ENCODE measurements at regions of chr17 and their contacts with region 1.

Region 1: DNA sequence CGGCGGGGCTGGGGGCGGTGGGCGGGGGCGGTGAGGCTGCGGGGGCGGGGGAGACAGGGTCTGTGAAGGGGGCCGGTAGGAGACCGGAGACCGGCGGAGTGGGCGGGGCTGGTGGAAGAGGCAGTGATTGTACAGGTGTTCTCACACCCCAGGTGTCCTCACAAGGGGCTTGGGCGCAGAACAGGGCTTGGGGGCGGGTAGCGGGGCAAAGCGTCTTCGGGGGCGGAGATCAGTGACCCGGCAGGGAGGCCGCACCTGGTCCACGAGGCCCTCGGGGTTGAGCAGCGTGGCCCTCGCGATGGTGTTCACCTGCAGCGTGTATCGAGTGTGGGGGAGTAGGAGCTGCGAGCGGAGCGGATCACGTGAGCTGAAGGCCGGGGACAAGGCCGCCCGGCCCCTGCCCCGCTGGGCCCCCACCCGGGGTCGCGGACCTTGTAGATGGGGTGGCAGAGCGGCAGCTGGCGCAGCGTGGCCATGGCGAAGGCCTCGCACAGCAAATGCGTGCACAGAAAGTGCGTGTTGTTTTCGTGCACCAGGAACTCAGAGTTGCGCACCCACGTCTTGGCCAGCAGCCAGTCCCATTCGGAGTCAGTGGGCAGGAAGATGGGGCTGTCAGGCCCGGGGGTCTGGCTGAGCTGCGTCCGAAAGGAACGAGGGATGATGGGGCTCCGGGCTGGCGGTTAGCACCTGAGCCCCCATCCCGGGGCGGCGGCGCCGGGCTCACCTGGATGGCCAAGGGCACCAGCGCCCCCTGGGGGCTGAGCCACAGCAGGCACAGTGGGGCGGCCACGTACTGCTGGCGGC is 8.5 kb downstream of the ALOXE3 start:
- DNase-seq: peak; percentile 87
- ATAC-seq: peak; percentile 98
- H3K4me3 Mint-ChIP-seq: peak overlapping the region; percentile 19
- H3K27ac Mint-ChIP-seq: no peak overlapping the region
- H3K4me1 Mint-ChIP-seq: no peaks in the 10 kb centered on the region
- H3K27me3 Mint-ChIP-seq: peaks cover 15% of the 10 kb centered on the region
- CTCF ChIP-seq: peak; percentile 98

Region 2: DNA sequence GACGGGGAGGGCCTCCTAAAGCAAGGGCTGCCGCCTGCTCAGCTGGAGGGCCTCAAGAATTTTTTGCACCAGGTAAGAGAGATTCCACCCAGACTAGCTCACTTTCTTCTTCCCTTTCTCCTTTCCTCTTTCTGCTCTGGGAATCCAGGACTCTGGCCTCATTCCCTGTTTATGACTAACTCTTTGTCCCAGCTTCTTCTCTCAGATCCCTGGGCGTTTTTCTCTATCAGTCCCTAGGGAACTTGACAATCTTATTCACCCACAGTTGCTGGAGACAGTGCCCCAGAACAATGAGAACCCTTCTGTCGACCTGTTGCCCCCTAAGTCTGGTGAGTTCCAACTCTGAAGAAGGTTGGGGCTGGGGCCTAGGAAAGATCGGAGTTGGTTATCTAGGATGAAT is 162.2 kb before region 1 on chr17:
- CTCF ChIA-PET with region 1: no interaction called
- POLR2A ChIA-PET with region 1: no interaction called
- intact Hi-C with region 1: no loop called
- DNase-seq: no peak
- ATAC-seq: no peak
- H3K4me3 Mint-ChIP-seq: no peak overlapping the region
- H3K27ac Mint-ChIP-seq: no peak overlapping the region
- H3K4me1 Mint-ChIP-seq: peaks cover 23% of the 10 kb centered on the region
- H3K27me3 Mint-ChIP-seq: no peaks in the 10 kb centered on the region
- CTCF ChIP-seq: no peak

Region 3: DNA sequence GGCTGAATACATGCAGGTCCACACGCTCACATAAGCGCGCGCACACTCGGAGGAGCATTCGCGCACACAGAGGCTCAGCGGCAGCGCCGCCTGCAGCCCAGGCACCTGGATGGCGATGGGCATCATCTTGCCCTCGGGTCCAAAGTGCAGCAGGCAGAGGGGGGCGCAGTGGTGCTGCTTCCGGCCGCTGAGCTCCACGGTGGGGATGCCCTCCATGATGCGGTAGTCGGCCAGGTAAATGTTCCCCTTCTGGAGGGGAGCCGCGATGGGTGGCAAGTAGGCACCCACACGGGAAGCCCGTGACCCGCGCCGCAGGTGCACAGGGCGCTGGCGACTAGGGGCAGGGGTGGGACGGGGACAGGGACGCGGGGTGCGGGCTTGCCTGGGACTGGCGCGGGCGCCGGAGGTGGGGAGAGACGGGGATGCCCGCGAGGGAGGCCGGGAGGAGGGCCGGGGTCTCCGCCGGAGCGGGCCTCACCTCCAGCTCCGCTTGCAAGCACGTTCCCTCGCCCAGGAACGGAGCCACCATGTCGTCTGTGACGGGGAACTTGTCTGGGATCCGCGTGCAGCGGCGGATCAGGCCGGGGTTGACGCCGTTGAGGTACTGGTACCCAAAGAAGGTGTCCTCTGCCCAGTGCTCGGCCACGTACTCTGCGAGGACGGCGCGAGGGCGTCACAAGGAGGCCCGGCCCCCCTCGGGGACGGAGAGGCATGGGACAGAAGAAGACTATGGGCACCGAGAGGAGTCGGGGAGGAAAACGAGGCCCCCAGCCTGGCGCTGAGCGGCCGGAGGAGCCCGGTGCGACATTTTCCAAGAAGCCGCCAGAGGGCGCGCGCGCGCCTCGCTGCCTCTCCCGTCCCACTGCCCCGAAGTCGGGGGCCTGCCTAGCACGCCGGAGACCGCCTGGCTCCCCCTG is 30.3 kb before region 1 on chr17:
- CTCF ChIA-PET with region 1: interaction called, 110 read pairs
- POLR2A ChIA-PET with region 1: interaction called, 3 read pairs
- intact Hi-C with region 1: loop called (anchors 5 kb)
- DNase-seq: peak; percentile 93
- ATAC-seq: peak; percentile 94
- H3K4me3 Mint-ChIP-seq: peak overlapping the region; percentile 96
- H3K27ac Mint-ChIP-seq: peak overlapping the region; percentile 93
- H3K4me1 Mint-ChIP-seq: peaks cover 11% of the 10 kb centered on the region
- H3K27me3 Mint-ChIP-seq: peaks cover 5% of the 10 kb centered on the region
- CTCF ChIP-seq: peak; percentile 87